ENCODE measurements at regions of chr6 and their contacts with region 1.

Region 1: DNA sequence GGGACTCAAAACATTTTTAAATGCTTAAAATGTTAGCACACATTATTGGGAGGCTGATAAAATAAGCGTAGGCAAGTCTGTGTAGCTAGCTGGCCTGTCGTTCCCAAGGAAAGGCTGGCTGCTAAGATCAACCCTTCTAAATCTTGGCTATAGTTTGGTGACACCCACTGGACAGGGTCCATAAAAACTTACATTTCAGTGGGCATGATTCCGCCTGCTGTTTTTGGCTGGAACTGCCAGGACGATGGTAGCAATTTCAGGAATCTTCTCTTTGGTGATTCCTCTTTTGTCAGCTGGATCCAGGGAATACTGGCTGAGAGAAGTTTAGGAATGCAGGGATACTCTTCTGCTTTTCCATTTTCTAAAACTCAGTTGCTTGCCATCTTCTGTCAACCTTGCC is 162.2 kb downstream of the NKAIN2 start:
- DNase-seq: peak; percentile 23
- ATAC-seq: peak; percentile 44; the same call in 1 of the 2 replicates
- H3K4me3 ChIP-seq: no peak overlapping the region
- H3K27ac ChIP-seq: no peak overlapping the region
- H3K4me1 ChIP-seq: no peaks in the 10 kb centered on the region
- H3K27me3 ChIP-seq: no peaks in the 10 kb centered on the region
- CTCF ChIP-seq: peak; percentile 59
- POLR2A ChIP-seq: no peak
- RAD21 ChIP-seq: peak; percentile 67

Region 2: DNA sequence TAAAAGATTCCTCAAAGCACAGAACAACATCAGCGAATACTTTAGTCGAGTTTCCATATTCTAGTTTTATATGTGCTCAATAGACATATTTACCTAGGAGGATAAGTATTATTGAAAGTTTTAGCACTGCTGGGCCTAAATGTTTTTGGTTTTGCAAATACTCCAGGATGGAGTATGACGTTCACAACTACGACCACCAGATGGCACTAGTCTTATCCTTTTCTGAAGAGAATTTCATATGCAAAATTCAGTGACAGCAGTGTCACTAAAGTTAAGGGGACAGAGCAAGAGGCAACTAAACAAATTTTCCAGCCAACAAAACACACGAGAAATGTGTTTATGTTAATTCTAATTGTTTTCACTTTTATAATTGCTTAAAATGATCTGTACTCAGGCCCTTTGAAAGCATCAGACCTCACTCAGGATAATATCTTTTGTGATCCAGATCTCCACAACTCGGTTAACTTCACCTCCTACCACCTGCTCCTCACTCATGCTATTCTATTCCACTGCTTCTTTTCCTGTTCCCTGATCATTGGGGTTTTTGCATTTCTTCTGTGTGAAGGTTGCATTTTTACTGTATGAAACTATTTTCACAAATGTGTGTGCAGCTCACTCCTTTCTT is 549.9 kb before region 1 on chr6:
- CTCF ChIA-PET with region 1: no interaction called
- POLR2A ChIA-PET with region 1: no interaction called
- dilution Hi-C with region 1: no loop called
- in situ Hi-C with region 1: no loop called
- intact Hi-C with region 1: loop called (anchors 1 kb)
- DNase-seq: peak; percentile 37
- ATAC-seq: peak; percentile 48; the same call in 1 of the 2 replicates
- H3K4me3 ChIP-seq: no peak overlapping the region
- H3K27ac ChIP-seq: no peak overlapping the region
- H3K4me1 ChIP-seq: no peaks in the 10 kb centered on the region
- H3K27me3 ChIP-seq: no peaks in the 10 kb centered on the region
- CTCF ChIP-seq: peak; percentile 57
- POLR2A ChIP-seq: no peak
- RAD21 ChIP-seq: peak; percentile 39